ENCODE measurements at regions of chr16 and their contacts with region 1.

Region 1: DNA sequence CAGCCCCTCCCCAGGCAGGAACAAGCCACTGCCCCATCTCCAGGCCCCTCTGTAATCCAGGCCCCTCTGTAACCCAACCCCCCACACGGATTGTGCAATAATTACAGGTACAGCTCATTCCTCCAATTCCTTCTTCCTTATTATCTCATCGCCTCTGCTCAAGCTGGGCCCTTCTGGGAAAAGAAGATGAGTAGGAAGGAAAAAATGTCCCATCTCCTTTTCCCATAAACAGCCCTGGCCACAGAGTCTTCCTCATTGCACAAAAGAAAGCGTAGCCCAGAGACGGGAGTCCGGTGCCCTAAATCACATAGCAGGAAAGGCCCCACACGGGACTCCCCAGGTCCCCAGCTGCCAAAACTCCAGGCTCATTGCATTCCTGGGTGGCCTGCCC is 3.6 kb upstream of the LITAFD start:
- DNase-seq: no peak
- ATAC-seq: no peak
- H3K4me3 ChIP-seq: no peak overlapping the region
- H3K4me3 Mint-ChIP-seq: no peak overlapping the region
- H3K27ac ChIP-seq: no peak overlapping the region
- H3K27ac Mint-ChIP-seq: no peak overlapping the region
- H3K4me1 ChIP-seq: peaks cover 19% of the 10 kb centered on the region
- H3K4me1 Mint-ChIP-seq: peaks cover 10% of the 10 kb centered on the region
- H3K27me3 ChIP-seq: peaks cover 0 to 2% of the 10 kb centered on the region in 2 experiments
- H3K27me3 Mint-ChIP-seq: no peaks in the 10 kb centered on the region
- CTCF ChIP-seq: no peak

Region 2: DNA sequence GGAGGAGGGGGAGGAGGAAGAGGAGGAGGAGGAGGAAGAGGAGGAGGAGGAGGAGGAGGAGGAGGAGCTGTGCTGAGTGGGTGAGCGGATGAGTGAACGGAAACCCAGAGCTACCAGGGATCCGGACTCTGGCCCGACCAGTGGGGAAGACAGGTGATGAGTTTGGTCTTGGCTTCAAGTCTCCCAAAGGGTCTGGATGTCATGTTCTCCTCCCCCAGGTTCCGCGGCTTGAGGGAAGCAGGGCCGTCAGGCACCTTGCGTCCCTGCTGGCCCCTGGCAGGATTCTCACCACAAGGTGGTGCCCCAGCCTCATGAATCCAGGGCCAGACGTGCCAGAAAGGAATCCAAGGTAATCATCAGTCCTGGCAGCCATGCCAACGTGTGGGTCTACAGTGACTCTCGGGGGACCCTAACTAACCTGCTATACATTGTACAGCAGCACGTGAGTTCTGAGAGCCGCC is 217.6 kb before region 1 on chr16:
- CTCF ChIA-PET with region 1: interaction called, 3 read pairs
- POLR2A ChIA-PET with region 1: no interaction called
- intact Hi-C with region 1: loop called (anchors 1 kb)
- DNase-seq: peak; percentile 17 to 71 (median 42)
- ATAC-seq: peak; percentile 64
- H3K4me3 ChIP-seq: no peak overlapping the region
- H3K4me3 Mint-ChIP-seq: no peak overlapping the region
- H3K27ac ChIP-seq: no peak overlapping the region
- H3K27ac Mint-ChIP-seq: no peak overlapping the region
- H3K4me1 ChIP-seq: no peaks in the 10 kb centered on the region
- H3K4me1 Mint-ChIP-seq: no peaks in the 10 kb centered on the region
- H3K27me3 ChIP-seq: no peaks in the 10 kb centered on the region
- H3K27me3 Mint-ChIP-seq: no peaks in the 10 kb centered on the region
- CTCF ChIP-seq: peak; percentile 59

Region 3: GRCh38 chr16:8818504-8819270 is 59.8 kb before region 1 on chr16:
- CTCF ChIA-PET with region 1: no interaction called
- POLR2A ChIA-PET with region 1: interaction called, 3 read pairs
- intact Hi-C with region 1: loop called in 1 of 2 experiments (anchors 5 kb)
- DNase-seq: no peak
- ATAC-seq: no peak
- H3K4me3 ChIP-seq: no peak overlapping the region
- H3K4me3 Mint-ChIP-seq: no peak overlapping the region
- H3K27ac ChIP-seq: no peak overlapping the region
- H3K27ac Mint-ChIP-seq: no peak overlapping the region
- H3K4me1 ChIP-seq: peaks cover 8% of the 10 kb centered on the region
- H3K4me1 Mint-ChIP-seq: peaks cover 21% of the 10 kb centered on the region
- H3K27me3 ChIP-seq: no peaks in the 10 kb centered on the region
- H3K27me3 Mint-ChIP-seq: no peaks in the 10 kb centered on the region
- CTCF ChIP-seq: no peak

Region 4: DNA sequence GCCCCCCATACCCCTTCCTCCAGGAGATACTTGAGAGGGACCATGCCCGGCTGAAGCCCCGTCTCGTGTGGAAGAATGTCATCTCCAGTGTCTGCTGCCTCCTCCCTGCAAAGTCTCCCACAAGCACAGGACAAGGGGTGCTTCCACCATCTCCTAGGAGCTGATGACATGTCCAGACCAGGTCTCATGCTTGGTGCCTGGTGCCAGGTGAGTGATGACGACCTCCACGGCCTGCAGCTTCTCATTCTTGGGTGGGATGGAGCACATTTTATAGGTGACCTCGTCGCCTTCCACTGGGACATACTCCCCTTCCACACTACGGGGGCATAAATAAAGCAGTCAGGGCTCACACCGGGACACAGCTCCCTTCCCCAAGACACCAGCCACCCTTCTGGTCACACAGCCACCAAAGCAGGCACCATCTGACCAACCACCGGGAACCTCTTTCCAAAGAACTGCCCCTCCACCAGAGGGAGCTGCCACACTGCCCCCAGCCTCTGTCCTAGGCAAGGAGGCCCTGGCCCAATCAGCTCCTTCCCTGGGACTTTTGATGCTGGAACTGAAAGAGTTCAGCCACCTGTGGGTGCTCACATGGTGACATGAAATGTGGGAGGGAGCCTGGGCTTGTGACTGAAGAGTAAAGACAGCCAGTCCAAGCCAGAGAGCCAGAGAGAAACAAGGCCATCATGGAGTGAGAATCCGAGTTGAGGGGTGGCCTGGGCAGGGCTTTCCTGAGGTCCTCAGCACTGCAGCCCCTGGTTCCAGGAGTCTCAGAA is 23.3 kb before region 1 on chr16:
- CTCF ChIA-PET with region 1: interaction called, 15 read pairs
- POLR2A ChIA-PET with region 1: no interaction called
- intact Hi-C with region 1: no loop called
- DNase-seq: no peak
- ATAC-seq: no peak
- H3K4me3 ChIP-seq: no peak overlapping the region
- H3K4me3 Mint-ChIP-seq: no peak overlapping the region
- H3K27ac ChIP-seq: no peak overlapping the region
- H3K27ac Mint-ChIP-seq: peak overlapping the region; percentile 34
- H3K4me1 ChIP-seq: peaks cover 18% of the 10 kb centered on the region
- H3K4me1 Mint-ChIP-seq: peaks cover 27% of the 10 kb centered on the region
- H3K27me3 ChIP-seq: no peaks in the 10 kb centered on the region
- H3K27me3 Mint-ChIP-seq: no peaks in the 10 kb centered on the region
- CTCF ChIP-seq: no peak

Region 5: DNA sequence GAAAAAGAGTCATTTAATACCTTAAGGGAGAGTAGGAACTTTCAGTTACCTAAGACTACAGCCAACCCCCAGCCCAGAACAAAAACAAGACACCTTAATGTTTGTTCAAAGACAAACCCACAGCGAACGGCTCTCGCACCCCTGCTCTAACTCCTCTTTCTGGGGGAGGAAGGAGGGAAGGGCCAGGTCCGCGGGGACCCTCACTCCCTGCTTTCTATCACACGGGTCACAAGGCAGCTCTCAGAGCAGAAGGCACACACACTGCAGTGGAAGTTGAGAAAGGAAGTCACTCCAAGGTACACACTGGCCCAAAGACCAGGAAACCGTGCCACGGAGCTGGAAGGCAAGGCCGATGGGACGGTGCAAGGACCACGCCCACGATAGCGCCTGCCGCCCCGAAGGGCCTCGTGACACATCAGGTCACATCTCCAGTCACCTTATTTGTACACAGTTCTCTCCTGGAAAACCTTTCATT is 13.6 kb after region 1 on chr16:
- CTCF ChIA-PET with region 1: interaction called, 13 read pairs
- POLR2A ChIA-PET with region 1: no interaction called
- intact Hi-C with region 1: no loop called
- DNase-seq: peak in 2 of 14 experiments; percentile 14 to 46
- ATAC-seq: no peak
- H3K4me3 ChIP-seq: no peak overlapping the region
- H3K4me3 Mint-ChIP-seq: no peak overlapping the region
- H3K27ac ChIP-seq: peak overlapping the region; percentile 17 to 50
- H3K27ac Mint-ChIP-seq: peak overlapping the region; percentile 92
- H3K4me1 ChIP-seq: peaks cover 14% of the 10 kb centered on the region
- H3K4me1 Mint-ChIP-seq: peaks cover 16% of the 10 kb centered on the region
- H3K27me3 ChIP-seq: no peaks in the 10 kb centered on the region
- H3K27me3 Mint-ChIP-seq: no peaks in the 10 kb centered on the region
- CTCF ChIP-seq: no peak

Measured in CD4-positive, alpha-beta T cell (primary cell).